Heart right ventricle (tissue), 16 donors: ENCODE measurements at regions of chr2 and their contacts with region 1.

Region 1: DNA sequence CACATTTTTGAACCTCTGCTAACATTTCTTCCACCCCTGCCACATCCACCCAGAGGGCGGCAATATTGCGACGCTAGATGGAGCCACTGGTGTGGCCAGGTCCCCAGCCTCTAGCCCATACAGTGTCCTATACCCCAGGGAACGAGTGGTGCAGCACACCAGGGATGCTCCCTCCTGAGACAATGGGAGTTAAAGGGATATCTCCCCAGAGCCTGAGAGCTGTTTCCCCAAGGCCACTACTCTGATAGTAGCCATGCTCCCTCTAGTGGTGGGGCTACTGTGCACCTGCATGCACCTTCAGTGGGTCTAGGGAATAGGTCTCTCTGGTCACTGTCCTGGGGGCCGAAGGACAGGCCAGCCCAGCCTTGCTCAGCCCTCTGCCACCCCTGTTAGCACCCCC is 336.4 kb upstream of the FSHR start:
- DNase-seq: peak in 1 of 2 donors; percentile 7
- ATAC-seq: peak in 1 of 8 donors; percentile 60
- H3K4me3 ChIP-seq: no peak overlapping the region
- H3K27ac ChIP-seq: no peak overlapping the region
- H3K4me1 ChIP-seq: no peaks in the 10 kb centered on the region
- H3K27me3 ChIP-seq: no peaks in the 10 kb centered on the region
- CTCF ChIP-seq: peak in 7 of 9 donors; percentile 29 to 48 (median 33)

Region 2: GRCh38 chr2:49131803-49132202 is 358.9 kb before region 1 on chr2:
- intact Hi-C with region 1: no loop called
- DNase-seq: no peak
- ATAC-seq: no peak
- H3K4me3 ChIP-seq: no peak overlapping the region
- H3K27ac ChIP-seq: no peak overlapping the region
- H3K4me1 ChIP-seq: no peaks in the 10 kb centered on the region
- H3K27me3 ChIP-seq: no peaks in the 10 kb centered on the region
- CTCF ChIP-seq: no peak

Region 3: GRCh38 chr2:49255409-49255971 is 235.2 kb before region 1 on chr2:
- intact Hi-C with region 1: loop called in 1 of 10 experiments (anchors 5 kb)
- DNase-seq: no peak
- ATAC-seq: no peak
- H3K4me3 ChIP-seq: no peak overlapping the region
- H3K27ac ChIP-seq: no peak overlapping the region
- H3K4me1 ChIP-seq: no peaks in the 10 kb centered on the region
- H3K27me3 ChIP-seq: no peaks in the 10 kb centered on the region
- CTCF ChIP-seq: peak in 8 of 9 donors; percentile 18 to 60 (median 34)